Naive thymus-derived CD4-positive, alpha-beta T cell (primary cell): ENCODE measurements at regions of chr1 and their contacts with region 1.

Region 1: GRCh38 chr1:203744075-203744972 is 20.7 kb upstream of the LAX1 start:
- DNase-seq: peak in 7 of 9 donors; percentile 20 to 59 (median 51)
- ATAC-seq: peak; percentile 85
- H3K4me3 ChIP-seq: no peak overlapping the region
- H3K4me3 Mint-ChIP-seq: peak overlapping the region; percentile 49 to 90 (median 76)
- H3K27ac ChIP-seq: peak overlapping the region; percentile 65
- H3K27ac Mint-ChIP-seq: peak overlapping the region; percentile 87 to 96 (median 93)
- H3K4me1 ChIP-seq: peaks cover 0 to 15% of the 10 kb centered on the region in 2 donors
- H3K4me1 Mint-ChIP-seq: peaks cover 12 to 31% (median 26%) of the 10 kb centered on the region in 7 donors
- H3K27me3 ChIP-seq: no peaks in the 10 kb centered on the region
- H3K27me3 Mint-ChIP-seq: no peaks in the 10 kb centered on the region

Region 2: GRCh38 chr1:203702130-203702577 is 42.2 kb before region 1 on chr1:
- CTCF ChIA-PET with region 1: no interaction called
- POLR2A ChIA-PET with region 1: no interaction called
- intact Hi-C with region 1: no loop called
- DNase-seq: peak; percentile 21 to 73 (median 54)
- ATAC-seq: peak; percentile 77
- H3K4me3 ChIP-seq: no peak overlapping the region
- H3K4me3 Mint-ChIP-seq: no peak overlapping the region
- H3K27ac ChIP-seq: no peak overlapping the region
- H3K27ac Mint-ChIP-seq: peak overlapping the region; percentile 58 to 92 (median 76)
- H3K4me1 ChIP-seq: no peaks in the 10 kb centered on the region
- H3K4me1 Mint-ChIP-seq: peaks cover 3 to 25% (median 12%) of the 10 kb centered on the region in 7 donors
- H3K27me3 ChIP-seq: no peaks in the 10 kb centered on the region
- H3K27me3 Mint-ChIP-seq: no peaks in the 10 kb centered on the region

Region 3: GRCh38 chr1:203776636-203777035 is 32.3 kb after region 1 on chr1:
- CTCF ChIA-PET with region 1: interaction called, 3 read pairs
- POLR2A ChIA-PET with region 1: no interaction called
- intact Hi-C with region 1: loop called in 1 of 2 experiments (anchors 5 kb)
- DNase-seq: no peak
- ATAC-seq: peak; percentile 40
- H3K4me3 ChIP-seq: no peak overlapping the region
- H3K4me3 Mint-ChIP-seq: peak overlapping the region in 1 of 10 donors; percentile 31
- H3K27ac ChIP-seq: no peak overlapping the region
- H3K27ac Mint-ChIP-seq: peak overlapping the region in 8 of 9 donors; percentile 22 to 85 (median 50)
- H3K4me1 ChIP-seq: no peaks in the 10 kb centered on the region
- H3K4me1 Mint-ChIP-seq: peaks cover 0 to 16% (median 7%) of the 10 kb centered on the region in 7 donors
- H3K27me3 ChIP-seq: no peaks in the 10 kb centered on the region
- H3K27me3 Mint-ChIP-seq: no peaks in the 10 kb centered on the region

Region 4: GRCh38 chr1:203880606-203881005 is 136.3 kb after region 1 on chr1:
- CTCF ChIA-PET with region 1: no interaction called
- POLR2A ChIA-PET with region 1: no interaction called
- intact Hi-C with region 1: no loop called
- DNase-seq: no peak
- ATAC-seq: no peak
- H3K4me3 ChIP-seq: no peak overlapping the region
- H3K4me3 Mint-ChIP-seq: no peak overlapping the region
- H3K27ac ChIP-seq: no peak overlapping the region
- H3K27ac Mint-ChIP-seq: no peak overlapping the region
- H3K4me1 ChIP-seq: no peaks in the 10 kb centered on the region
- H3K4me1 Mint-ChIP-seq: no peaks in the 10 kb centered on the region
- H3K27me3 ChIP-seq: no peaks in the 10 kb centered on the region
- H3K27me3 Mint-ChIP-seq: no peaks in the 10 kb centered on the region

Region 5: DNA sequence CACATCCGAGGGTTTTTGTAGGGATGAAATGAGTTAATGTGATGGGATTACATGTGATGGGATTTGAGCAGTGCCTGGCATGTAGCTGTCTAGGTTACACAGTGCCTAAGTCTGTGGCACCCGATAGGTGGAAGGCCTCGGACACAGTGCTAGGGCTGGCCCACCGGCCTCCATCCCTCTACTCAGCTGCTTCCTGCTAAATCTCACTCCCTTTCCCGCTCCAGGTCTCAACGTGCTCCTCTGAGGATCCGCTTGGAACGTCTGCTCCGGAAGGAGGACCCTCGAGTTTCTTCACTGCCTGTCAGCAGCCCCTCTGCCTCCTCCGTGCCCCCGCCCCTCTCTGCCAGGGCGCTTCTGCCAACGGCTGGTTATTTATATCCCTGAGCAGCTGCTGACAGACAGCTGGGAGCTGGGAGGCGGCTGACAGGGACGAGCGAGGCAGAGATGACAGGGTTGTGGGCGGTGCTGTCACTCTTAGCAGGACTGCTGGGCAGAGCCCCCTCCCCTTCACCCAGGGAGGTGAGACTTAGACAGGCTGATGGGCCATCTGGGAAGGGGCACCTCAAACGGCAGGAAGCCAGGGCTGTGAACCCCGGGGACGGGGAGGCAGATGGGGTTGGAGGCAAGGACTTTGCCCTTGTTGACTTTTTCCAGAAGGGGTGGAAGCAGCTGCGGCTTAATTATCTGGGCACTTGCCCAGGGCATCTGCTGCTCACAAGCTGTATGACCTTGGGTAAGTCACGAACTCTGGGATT is 967.8 kb after region 1 on chr1:
- CTCF ChIA-PET with region 1: no interaction called
- POLR2A ChIA-PET with region 1: no interaction called
- intact Hi-C with region 1: no loop called
- DNase-seq: no peak
- ATAC-seq: no peak
- H3K4me3 ChIP-seq: no peak overlapping the region
- H3K4me3 Mint-ChIP-seq: peak overlapping the region in 1 of 10 donors; percentile 12
- H3K27ac ChIP-seq: no peak overlapping the region
- H3K27ac Mint-ChIP-seq: no peak overlapping the region
- H3K4me1 ChIP-seq: peaks cover 0 to 5% of the 10 kb centered on the region in 2 donors
- H3K4me1 Mint-ChIP-seq: peaks cover 5 to 32% (median 16%) of the 10 kb centered on the region in 7 donors
- H3K27me3 ChIP-seq: no peaks in the 10 kb centered on the region
- H3K27me3 Mint-ChIP-seq: peaks cover 19 to 38% (median 28%) of the 10 kb centered on the region in 5 donors